Endothelial cell of umbilical vein (primary cell): ENCODE measurements at regions of chr2 and their contacts with region 1.

Region 1: GRCh38 chr2:33561872-33562271 is 37.2 kb downstream of the FAM98A start:
- DNase-seq: no peak
- H3K4me3 ChIP-seq: no peak overlapping the region
- H3K27ac ChIP-seq: no peak overlapping the region
- H3K4me1 ChIP-seq: no peaks in the 10 kb centered on the region
- H3K27me3 ChIP-seq: no peaks in the 10 kb centered on the region
- CTCF ChIP-seq: no peak
- POLR2A ChIP-seq: no peak

Region 2: DNA sequence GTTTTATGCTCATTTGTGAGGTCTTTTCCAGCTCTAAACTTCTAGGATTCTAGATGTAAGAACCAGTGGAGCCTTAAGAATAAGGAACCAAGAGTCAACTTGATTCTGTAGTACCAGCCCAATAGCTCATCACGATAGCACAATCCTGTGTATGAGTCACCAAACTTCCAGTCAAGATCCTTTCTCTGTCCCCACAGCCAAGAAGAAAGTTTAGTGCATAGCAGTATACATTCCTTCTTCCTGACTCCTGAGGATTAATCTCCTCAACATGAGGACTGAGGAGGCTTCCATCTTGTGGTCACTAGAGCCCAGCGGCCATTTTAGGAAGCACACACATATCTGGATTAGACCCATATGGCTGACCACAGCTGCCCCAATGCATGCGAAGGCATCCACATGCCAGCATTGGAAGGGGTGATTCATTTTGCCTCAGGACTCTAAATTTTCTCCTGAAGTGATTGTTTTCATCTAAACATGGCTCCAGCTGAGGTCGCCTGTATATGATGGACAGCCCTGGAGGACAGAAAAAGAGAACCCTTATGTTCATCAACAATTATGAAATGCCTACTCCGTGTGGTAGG is 32.0 kb before region 1 on chr2:
- CTCF ChIA-PET with region 1: no interaction called
- POLR2A ChIA-PET with region 1: no interaction called
- dilution Hi-C with region 1: no loop called
- intact Hi-C with region 1: no loop called
- DNase-seq: peak; percentile 12
- H3K4me3 ChIP-seq: no peak overlapping the region
- H3K27ac ChIP-seq: no peak overlapping the region
- H3K4me1 ChIP-seq: no peaks in the 10 kb centered on the region
- H3K27me3 ChIP-seq: no peaks in the 10 kb centered on the region
- CTCF ChIP-seq: no peak
- POLR2A ChIP-seq: no peak

Region 3: DNA sequence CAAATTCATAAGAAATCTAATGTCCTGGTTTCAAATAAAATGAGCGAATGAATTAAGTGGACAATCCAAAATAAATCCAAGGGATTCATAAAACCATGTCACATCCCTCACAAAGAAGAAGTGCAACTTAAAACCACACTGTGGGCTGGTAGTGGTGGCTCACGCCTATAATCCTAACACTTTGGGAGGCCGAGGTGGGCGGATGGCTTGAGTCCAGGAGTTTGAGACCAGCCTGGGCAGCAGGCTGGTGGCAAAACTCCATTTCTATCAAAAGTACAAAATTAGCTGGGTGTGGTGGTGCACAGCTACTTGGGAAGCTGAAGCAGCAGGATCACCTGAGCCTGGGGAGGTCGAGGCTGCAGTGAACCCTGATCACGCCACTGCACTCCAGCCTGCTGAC is 11.8 kb after region 1 on chr2:
- CTCF ChIA-PET with region 1: interaction called, 12 read pairs
- POLR2A ChIA-PET with region 1: no interaction called
- dilution Hi-C with region 1: no loop called
- intact Hi-C with region 1: no loop called
- DNase-seq: no peak
- H3K4me3 ChIP-seq: no peak overlapping the region
- H3K27ac ChIP-seq: no peak overlapping the region
- H3K4me1 ChIP-seq: no peaks in the 10 kb centered on the region
- H3K27me3 ChIP-seq: no peaks in the 10 kb centered on the region
- CTCF ChIP-seq: no peak
- POLR2A ChIP-seq: no peak